ENCODE measurements at regions of chr7 and their contacts with region 1.

Region 1: DNA sequence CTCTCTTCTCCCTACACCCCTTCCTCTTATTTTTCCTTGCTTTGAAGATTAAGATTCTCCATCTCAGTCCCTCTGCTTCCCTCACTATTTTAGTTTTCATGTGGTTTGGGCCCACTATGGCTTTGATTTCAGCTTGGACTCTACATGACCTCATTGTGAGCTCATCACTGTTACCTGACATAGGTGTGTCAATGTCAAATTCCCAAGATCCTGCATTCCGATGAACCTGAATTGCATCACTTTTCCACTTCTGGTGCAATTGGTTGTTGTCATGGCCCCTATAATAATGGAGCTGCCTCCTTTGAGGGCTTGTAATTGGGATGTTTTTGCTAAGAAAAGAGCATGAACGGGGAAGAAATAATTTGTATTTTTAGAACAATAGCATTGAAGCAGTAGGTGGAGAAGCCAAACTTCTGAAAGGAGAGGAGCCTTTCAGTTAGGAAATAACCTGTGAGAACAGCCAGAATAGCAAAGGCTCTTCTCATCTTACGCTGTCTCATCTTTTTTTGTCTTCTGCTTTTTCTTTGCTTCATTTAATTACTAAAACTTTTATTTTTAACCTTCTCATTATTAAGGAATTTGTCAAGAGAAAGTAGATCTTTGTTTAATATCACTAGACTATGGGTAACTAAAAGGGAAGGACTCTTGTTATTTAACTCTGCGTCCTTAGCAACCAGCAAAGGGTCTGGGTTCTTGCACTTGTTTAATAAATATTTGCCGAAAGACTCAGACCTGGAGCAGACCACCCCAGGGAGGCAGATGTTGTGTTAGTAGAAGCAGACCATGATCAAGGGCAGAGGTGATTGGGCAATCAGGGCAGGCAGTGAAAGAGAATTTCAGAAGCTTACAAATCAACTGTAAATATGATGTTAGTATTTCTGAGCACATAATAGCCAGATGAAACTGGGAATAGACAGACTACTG is 95.4 kb downstream of the TES start:
- DNase-seq: no peak
- H3K27ac ChIP-seq: no peak overlapping the region
- CTCF ChIP-seq: no peak

Region 2: DNA sequence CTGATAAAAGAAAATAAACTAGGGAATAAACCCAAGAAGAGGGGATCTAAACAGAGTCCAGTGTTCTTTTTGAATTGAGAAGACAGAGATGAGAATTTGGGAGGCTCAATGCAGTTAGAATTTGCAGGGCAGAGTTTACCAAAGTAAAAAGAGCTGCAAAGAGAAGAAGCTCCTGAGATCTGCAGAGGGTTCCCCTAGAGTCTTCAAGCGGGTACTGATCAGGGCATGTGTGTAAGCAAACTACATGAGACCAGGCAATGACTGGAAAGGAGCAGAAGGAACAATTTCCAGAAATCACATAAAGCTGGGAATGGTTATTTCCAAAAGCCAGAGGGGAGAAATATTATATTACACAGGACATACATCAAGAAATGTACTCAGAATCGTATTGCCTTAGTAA is 153.5 kb before region 1 on chr7:
- CTCF ChIA-PET with region 1: no interaction called
- POLR2A ChIA-PET with region 1: no interaction called
- DNase-seq: no peak
- H3K27ac ChIP-seq: no peak overlapping the region
- CTCF ChIP-seq: no peak

Region 3: DNA sequence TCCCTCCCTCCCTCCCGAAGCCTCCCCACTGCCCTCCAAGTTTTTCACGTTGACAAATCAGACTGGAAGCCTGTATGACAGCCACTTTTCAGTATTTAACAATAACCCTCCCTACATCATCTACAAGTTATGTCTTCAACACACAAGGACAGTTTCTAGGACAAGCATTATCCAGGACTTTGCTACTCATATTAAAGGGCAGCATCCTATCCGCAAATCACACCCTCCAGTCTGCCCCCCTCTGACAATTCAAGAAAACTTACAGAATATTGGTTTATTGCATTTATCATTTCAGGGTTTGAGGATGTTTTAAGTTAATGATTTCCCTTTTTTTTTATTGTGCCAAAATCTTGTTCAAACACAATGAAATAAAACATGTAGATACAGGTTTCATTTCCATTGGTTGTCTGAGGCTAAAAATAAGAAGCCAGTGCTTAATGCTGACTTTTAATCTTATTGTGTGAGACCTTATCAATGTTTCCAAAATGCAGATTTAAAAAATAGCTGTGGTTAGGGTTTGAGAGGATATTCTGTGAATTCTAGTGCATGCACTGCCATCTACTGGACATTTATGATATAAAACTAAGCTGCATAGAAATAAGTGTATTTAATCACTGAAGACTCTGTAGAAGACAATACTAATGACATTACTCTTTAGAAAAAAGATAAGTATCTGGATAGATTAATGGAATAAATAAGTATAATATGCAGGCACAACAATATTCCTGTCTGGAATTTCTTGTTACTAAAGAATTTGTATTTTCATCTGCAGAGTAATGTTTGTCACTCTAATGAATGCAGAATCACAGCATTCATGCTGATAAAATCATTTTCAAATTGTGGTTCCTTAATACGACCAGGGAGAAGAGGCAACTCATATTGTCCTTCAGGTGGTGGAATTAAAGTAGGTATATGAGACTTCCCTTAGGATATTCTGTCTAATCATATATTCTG is 283.2 kb after region 1 on chr7:
- CTCF ChIA-PET with region 1: no interaction called
- POLR2A ChIA-PET with region 1: no interaction called
- DNase-seq: peak; percentile 31
- H3K27ac ChIP-seq: no peak overlapping the region; the same call in 1 of the 2 replicates
- CTCF ChIP-seq: peak; percentile 84

Region 4: GRCh38 chr7:116683786-116684185 is 378.0 kb after region 1 on chr7:
- CTCF ChIA-PET with region 1: no interaction called
- POLR2A ChIA-PET with region 1: no interaction called
- DNase-seq: no peak
- H3K27ac ChIP-seq: no peak overlapping the region
- CTCF ChIP-seq: no peak

Region 5: GRCh38 chr7:117493460-117493859 is 1187.7 kb after region 1 on chr7:
- CTCF ChIA-PET with region 1: interaction called, 11 read pairs
- POLR2A ChIA-PET with region 1: no interaction called
- DNase-seq: no peak
- H3K27ac ChIP-seq: no peak overlapping the region
- CTCF ChIP-seq: no peak